Activated B cell treated with CpG ODN at 0.5 μM for 24 hours (primary cell): ENCODE measurements at regions of chr2 and their contacts with region 1.

Region 1: DNA sequence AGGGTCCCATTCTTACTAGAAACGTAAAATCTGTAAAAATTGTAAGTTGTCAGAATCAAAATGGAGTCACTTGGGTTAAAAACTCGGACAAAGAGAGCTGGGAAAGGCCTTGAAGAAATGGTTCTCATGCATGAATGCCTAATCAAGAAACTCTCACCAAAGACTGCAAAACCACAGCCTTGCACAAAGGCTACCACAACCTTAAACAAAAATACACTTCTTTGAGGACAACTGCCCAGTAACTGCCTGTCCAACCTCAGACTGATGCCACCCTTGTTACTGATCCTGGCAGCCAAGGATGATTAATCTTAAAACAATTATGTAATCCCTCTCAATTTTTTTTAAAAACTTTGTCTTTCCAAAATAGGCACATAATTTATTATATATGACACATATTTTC is 299.3 kb downstream of the CCDC85A start:
- DNase-seq: no peak
- ATAC-seq: no peak
- H3K4me3 Mint-ChIP-seq: no peak overlapping the region
- H3K27ac Mint-ChIP-seq: no peak overlapping the region
- H3K4me1 Mint-ChIP-seq: no peaks in the 10 kb centered on the region
- H3K27me3 Mint-ChIP-seq: no peaks in the 10 kb centered on the region
- CTCF ChIP-seq: no peak

Region 2: GRCh38 chr2:55916473-55917049 is 566.5 kb before region 1 on chr2:
- CTCF ChIA-PET with region 1: no interaction called
- POLR2A ChIA-PET with region 1: no interaction called
- intact Hi-C with region 1: loop called (anchors 5 kb)
- DNase-seq: no peak
- ATAC-seq: no peak
- H3K4me3 Mint-ChIP-seq: no peak overlapping the region
- H3K27ac Mint-ChIP-seq: no peak overlapping the region
- H3K4me1 Mint-ChIP-seq: no peaks in the 10 kb centered on the region
- H3K27me3 Mint-ChIP-seq: peaks cover 4% of the 10 kb centered on the region
- CTCF ChIP-seq: no peak